ENCODE measurements at regions of chr2 and their contacts with region 1.

Region 1: DNA sequence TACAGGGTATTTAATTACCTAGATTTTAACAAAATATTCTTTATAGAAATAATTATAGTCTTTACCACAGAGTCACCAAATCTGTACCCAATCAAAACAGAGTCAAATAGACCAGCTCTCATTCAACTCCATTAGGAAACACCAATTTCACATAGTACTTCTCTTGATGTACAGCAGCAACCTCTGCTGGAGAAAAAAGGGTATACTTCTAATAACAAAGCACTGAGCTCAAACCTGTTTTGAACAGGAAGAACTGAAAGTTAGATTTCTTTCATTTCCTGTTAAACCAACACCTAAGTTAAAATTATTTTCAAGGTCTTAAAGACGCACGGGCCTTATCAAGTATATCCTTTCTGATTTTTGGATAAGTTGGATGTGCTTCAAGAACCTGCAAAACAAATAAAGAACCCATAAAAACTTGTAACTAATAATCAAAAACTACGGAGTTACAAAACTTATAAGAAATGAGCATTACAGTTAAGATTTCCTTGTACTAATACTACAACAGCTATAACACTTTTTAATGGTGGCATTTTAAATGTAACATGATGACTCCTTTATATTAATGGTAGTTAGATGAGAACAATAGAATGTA is 79.0 kb downstream of the TTC21B start:
- DNase-seq: no peak
- ATAC-seq: peak; percentile 83
- H3K4me3 Mint-ChIP-seq: no peak overlapping the region
- H3K27ac Mint-ChIP-seq: no peak overlapping the region
- H3K4me1 Mint-ChIP-seq: peaks cover 23% of the 10 kb centered on the region
- H3K27me3 Mint-ChIP-seq: no peaks in the 10 kb centered on the region
- CTCF ChIP-seq: peak; percentile 53

Region 2: GRCh38 chr2:165401285-165401852 is 473.2 kb before region 1 on chr2:
- CTCF ChIA-PET with region 1: interaction called, 17 read pairs
- POLR2A ChIA-PET with region 1: no interaction called
- intact Hi-C with region 1: loop called (anchors 5 kb)
- DNase-seq: peak; percentile 13
- ATAC-seq: no peak
- H3K4me3 Mint-ChIP-seq: no peak overlapping the region
- H3K27ac Mint-ChIP-seq: no peak overlapping the region
- H3K4me1 Mint-ChIP-seq: peaks cover 5% of the 10 kb centered on the region
- H3K27me3 Mint-ChIP-seq: peaks cover 9% of the 10 kb centered on the region
- CTCF ChIP-seq: peak; percentile 66

Region 3: DNA sequence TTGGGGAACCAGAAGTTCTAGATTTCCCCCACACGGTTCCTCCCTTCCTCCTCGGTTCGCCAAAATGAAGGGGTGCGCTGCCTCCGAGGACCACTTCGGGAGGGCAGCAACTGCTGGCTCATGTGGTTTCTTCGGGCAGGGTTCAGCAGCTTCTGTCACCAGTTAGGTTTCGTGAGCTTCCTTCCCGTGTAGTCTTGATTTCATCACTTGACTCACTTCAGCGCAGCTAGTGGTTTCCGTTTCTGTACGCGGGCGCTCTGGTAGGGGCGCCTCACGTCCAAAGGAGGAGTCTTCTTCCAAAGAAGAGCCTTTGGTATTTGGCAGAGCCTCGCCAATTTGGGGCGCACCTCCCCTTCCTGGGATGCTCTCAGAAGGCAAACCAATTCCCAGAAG is 80.0 kb before region 1 on chr2:
- CTCF ChIA-PET with region 1: interaction called, 15 read pairs
- POLR2A ChIA-PET with region 1: no interaction called
- intact Hi-C with region 1: no loop called
- DNase-seq: peak; percentile 79
- ATAC-seq: peak; percentile 95
- H3K4me3 Mint-ChIP-seq: peak overlapping the region; percentile 85
- H3K27ac Mint-ChIP-seq: peak overlapping the region; percentile 87
- H3K4me1 Mint-ChIP-seq: peaks cover 15% of the 10 kb centered on the region
- H3K27me3 Mint-ChIP-seq: peaks cover 27% of the 10 kb centered on the region
- CTCF ChIP-seq: no peak

Region 4: DNA sequence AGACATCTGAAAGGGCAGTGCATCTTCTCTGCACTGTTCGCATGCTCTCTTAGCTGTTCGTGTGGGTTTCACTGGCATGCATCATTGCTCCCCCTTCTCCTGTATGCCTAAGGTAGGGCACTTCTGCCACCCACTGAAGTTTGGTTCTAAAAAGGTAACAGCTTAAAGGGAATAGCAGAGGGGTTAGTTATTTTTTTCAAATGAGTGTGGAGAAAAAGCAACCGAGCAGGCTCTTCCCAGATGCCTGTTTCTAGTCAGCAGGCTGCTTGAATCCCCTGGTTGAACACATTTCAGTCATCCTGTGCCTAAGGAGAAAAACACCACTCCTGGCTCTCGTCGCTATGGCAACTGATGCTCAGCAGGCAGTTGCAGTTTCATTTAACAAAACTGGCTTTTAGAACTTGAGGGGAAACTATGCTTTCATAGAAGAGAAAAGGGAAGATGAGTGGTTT is 10.7 kb before region 1 on chr2:
- CTCF ChIA-PET with region 1: interaction called, 11 read pairs
- POLR2A ChIA-PET with region 1: no interaction called
- intact Hi-C with region 1: no loop called
- DNase-seq: peak; percentile 22
- ATAC-seq: no peak
- H3K4me3 Mint-ChIP-seq: no peak overlapping the region
- H3K27ac Mint-ChIP-seq: no peak overlapping the region
- H3K4me1 Mint-ChIP-seq: peaks cover 5% of the 10 kb centered on the region
- H3K27me3 Mint-ChIP-seq: no peaks in the 10 kb centered on the region
- CTCF ChIP-seq: no peak

Measured in activated CD8-positive, alpha-beta T cell treated with anti-CD3 and anti-CD28 coated beads for 36 hours (primary cell).